OCI-LY7 (cell line): ENCODE measurements at regions of chr1 and their contacts with region 1.

Region 1: DNA sequence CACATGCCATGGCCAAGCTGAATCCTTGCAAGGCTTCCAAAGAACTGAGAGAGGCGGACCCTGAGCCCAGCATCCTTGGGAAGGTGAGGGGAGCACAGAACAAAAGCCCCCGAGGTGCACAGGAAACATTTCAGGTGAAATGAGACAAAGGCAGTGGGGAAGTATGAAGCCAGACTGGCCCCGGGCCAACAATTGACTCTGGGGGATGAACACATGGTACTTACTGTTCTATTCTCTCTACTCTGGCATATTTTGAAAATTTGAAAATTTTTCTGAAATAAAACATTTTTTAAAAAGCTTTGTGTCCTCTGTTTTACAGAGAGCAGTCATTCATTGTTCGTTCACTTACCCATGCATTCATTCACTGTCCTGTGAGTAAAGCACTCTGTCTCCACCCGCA is 77.7 kb downstream of the GRIK3 start:
- DNase-seq: peak; percentile 60
- H3K4me3 ChIP-seq: no peak overlapping the region
- H3K27ac ChIP-seq: peak overlapping the region; percentile 99
- H3K4me1 ChIP-seq: peaks cover 73% of the 10 kb centered on the region
- CTCF ChIP-seq: no peak

Region 2: DNA sequence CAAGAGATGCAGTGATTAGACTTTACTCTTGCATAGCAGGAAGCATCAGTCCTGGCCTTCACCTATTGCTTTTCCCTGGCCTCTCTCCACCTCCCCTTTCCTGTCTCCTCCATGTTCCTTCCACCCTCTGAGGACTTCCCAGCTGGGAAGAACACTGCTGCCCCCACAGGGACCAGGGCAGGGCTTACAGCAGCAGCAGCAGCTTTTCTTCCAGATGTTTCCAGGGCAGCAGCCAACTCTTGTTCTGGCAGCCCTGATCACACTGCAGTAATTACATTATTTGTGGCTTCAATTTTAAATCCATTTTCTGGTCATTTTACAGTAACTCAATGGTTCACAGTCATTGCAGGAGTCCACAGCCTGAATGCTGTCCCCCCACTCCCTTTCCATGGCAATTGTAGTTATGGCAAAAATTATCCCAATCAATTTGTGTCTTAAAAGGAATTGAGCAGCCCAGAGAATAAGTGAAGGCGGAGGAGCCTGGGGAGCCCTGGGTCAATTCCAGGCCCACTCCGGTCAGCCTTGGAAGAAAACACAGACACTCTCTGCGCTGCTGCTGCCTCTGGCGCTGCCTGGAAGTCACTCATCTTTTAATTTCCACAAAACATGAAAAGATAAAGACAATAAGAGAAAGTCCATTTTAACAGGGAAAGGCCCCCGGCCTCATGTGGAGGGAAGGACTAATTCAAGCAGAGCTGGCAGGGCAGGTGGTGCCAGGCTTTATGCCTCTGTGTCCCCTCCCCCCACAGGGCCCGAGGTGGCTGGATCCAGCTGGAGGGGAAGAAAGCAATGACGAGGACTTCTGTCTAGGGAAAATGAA is 70.8 kb before region 1 on chr1:
- CTCF ChIA-PET with region 1: no interaction called
- POLR2A ChIA-PET with region 1: interaction called, 3 read pairs
- intact Hi-C with region 1: loop called (anchors 1 kb)
- DNase-seq: no peak
- H3K4me3 ChIP-seq: peak overlapping the region; percentile 37
- H3K27ac ChIP-seq: peak overlapping the region; percentile 92
- H3K4me1 ChIP-seq: peaks cover 75% of the 10 kb centered on the region
- CTCF ChIP-seq: peak; percentile 39; the same call in 1 of the 2 replicates

Region 3: DNA sequence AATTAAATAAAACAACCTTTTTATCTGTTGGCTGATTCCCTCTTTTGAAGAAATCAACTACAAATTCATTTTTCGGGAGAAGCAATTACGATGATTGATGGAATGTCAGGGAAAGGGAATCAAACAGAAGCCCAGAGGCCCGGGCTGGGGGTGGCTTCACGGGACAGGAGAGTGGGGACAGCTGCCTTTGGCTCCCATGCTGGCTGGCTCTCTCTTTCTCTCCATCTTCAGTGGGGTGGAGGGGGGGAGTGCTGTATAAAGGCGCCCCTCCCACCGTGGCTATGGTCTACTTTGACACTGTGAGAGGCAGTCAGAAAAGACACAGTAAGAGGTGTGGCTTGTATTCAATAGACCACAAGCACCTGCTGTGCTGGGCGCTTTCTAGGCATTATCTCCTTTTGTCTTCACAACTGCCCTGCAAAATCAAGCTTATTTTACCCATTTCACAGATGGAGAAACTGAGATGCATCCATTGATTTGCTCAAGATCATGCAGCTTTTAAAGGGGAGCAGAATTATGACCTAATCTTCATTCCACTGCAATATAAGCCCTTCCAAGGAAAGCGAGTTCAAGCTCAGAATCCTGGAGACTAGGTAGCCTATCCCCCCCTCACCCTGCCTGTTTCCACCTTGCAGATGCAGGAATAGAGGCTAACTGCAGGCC is 15.1 kb before region 1 on chr1:
- CTCF ChIA-PET with region 1: interaction called, 4 read pairs
- POLR2A ChIA-PET with region 1: interaction called, 29 read pairs
- intact Hi-C with region 1: no loop called
- DNase-seq: peak; percentile 75
- H3K4me3 ChIP-seq: peak overlapping the region; percentile 8
- H3K27ac ChIP-seq: peak overlapping the region; percentile 59
- H3K4me1 ChIP-seq: peaks cover 90% of the 10 kb centered on the region
- CTCF ChIP-seq: no peak

Region 4: GRCh38 chr1:36971852-36972618 is 15.5 kb after region 1 on chr1:
- CTCF ChIA-PET with region 1: no interaction called
- POLR2A ChIA-PET with region 1: no interaction called
- intact Hi-C with region 1: no loop called
- DNase-seq: no peak
- H3K4me3 ChIP-seq: no peak overlapping the region
- H3K27ac ChIP-seq: no peak overlapping the region
- H3K4me1 ChIP-seq: peaks cover 34% of the 10 kb centered on the region
- CTCF ChIP-seq: no peak

Region 5: GRCh38 chr1:37001703-37002102 is 45.1 kb after region 1 on chr1:
- CTCF ChIA-PET with region 1: no interaction called
- POLR2A ChIA-PET with region 1: interaction called, 4 read pairs
- intact Hi-C with region 1: loop called (anchors 2 kb)
- DNase-seq: peak; percentile 66
- H3K4me3 ChIP-seq: no peak overlapping the region
- H3K27ac ChIP-seq: peak overlapping the region; percentile 3
- H3K4me1 ChIP-seq: peaks cover 60% of the 10 kb centered on the region
- CTCF ChIP-seq: peak; percentile 63

Region 6: DNA sequence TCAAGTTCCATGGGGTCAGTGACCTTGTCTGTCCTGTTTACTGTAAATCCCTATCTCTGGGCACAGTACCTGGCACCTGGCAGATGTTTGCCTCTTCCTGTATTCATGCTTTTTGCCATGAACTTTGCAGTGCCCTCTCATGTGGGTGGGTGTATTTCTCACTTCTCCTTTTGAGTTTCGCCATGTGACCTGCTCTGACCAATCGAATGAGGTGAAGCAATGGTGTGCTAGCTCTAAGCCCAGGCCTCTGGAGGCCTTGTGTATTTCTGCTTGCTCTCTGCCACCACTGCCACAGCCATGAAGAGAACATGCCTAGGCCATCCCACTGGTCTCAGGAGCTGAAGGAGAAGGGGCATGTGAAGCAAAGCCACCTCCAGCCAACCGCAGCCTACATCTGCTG is 332.3 kb after region 1 on chr1:
- CTCF ChIA-PET with region 1: no interaction called
- POLR2A ChIA-PET with region 1: no interaction called
- intact Hi-C with region 1: loop called (anchors 2 kb)
- DNase-seq: peak; percentile 98
- H3K4me3 ChIP-seq: peak overlapping the region; percentile 32
- H3K27ac ChIP-seq: peak overlapping the region; percentile 91
- H3K4me1 ChIP-seq: peaks cover 61% of the 10 kb centered on the region
- CTCF ChIP-seq: no peak